Calu3 (cell line): ENCODE measurements at regions of chr2 and their contacts with region 1.

Region 1: GRCh38 chr2:43005245-43005974 is 213.0 kb upstream of the HAAO start:
- DNase-seq: peak; percentile 95
- H3K4me3 Mint-ChIP-seq: peak overlapping the region; percentile 61
- H3K27ac Mint-ChIP-seq: peak overlapping the region; percentile 93
- H3K4me1 Mint-ChIP-seq: peaks cover 86% of the 10 kb centered on the region
- H3K27me3 Mint-ChIP-seq: no peaks in the 10 kb centered on the region
- CTCF ChIP-seq: no peak

Region 2: GRCh38 chr2:42754021-42754775 is 251.2 kb before region 1 on chr2:
- CTCF ChIA-PET with region 1: no interaction called
- intact Hi-C with region 1: no loop called
- DNase-seq: no peak
- H3K4me3 Mint-ChIP-seq: no peak overlapping the region
- H3K27ac Mint-ChIP-seq: no peak overlapping the region
- H3K4me1 Mint-ChIP-seq: no peaks in the 10 kb centered on the region
- H3K27me3 Mint-ChIP-seq: no peaks in the 10 kb centered on the region
- CTCF ChIP-seq: no peak

Region 3: GRCh38 chr2:42987112-42987922 is 18.1 kb before region 1 on chr2:
- CTCF ChIA-PET with region 1: interaction called, 30 read pairs
- intact Hi-C with region 1: no loop called
- DNase-seq: peak; percentile 70
- H3K4me3 Mint-ChIP-seq: no peak overlapping the region
- H3K27ac Mint-ChIP-seq: peak overlapping the region; percentile 93
- H3K4me1 Mint-ChIP-seq: peaks cover 48% of the 10 kb centered on the region
- H3K27me3 Mint-ChIP-seq: no peaks in the 10 kb centered on the region
- CTCF ChIP-seq: no peak

Region 4: DNA sequence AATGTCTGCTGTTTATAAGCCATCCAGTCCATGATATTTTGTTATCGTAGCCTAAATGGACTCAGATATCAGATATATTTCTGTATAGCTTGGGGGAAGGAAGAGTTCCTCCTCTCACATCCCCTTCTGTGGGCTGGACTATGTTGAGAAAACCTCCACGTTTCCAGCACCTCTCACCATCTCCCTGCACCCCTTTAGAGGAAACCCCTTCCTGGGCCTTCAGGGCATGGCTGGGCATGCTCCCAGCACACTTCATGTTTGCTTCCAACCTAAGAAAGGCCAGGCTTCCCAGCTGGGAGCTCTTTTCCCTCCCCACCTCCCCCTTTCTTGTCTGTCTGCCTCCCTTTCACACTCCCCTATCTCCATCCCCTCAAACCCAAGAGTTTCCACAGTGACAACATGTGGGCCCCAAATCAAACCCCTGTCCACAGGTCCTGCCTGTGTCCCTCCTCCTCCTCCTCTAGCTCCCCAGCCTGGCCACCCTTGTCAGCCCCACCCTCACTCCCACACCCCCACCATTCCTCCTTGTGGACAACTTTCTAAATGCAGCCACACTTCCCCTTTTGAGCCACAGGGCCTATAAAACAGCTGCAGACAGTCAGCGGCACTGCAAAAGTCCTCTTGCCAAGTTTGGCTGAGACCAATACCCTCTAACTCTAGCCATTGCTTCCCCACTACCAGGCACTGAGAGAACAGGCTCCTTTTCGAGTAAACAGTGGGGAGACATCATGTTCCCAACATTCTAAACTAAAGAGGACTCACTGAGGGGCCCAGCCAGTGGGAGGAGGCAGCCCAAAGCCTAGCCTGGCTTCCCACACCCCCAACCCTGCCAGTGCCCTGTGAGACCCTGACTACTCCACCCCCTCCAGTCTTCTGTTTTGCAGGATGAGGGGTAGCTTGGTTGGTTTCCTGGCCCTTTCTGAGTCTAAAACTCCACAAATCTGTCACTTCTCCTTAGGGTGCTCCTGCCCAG is 100.5 kb after region 1 on chr2:
- CTCF ChIA-PET with region 1: no interaction called
- intact Hi-C with region 1: no loop called
- DNase-seq: peak; percentile 33
- H3K4me3 Mint-ChIP-seq: no peak overlapping the region
- H3K27ac Mint-ChIP-seq: no peak overlapping the region
- H3K4me1 Mint-ChIP-seq: peaks cover 20% of the 10 kb centered on the region
- H3K27me3 Mint-ChIP-seq: no peaks in the 10 kb centered on the region
- CTCF ChIP-seq: no peak